Activated CD8-positive, alpha-beta T cell treated with anti-CD3 and anti-CD28 coated beads for 36 hours (primary cell): ENCODE measurements at regions of chr2 and their contacts with region 1.

Region 1: DNA sequence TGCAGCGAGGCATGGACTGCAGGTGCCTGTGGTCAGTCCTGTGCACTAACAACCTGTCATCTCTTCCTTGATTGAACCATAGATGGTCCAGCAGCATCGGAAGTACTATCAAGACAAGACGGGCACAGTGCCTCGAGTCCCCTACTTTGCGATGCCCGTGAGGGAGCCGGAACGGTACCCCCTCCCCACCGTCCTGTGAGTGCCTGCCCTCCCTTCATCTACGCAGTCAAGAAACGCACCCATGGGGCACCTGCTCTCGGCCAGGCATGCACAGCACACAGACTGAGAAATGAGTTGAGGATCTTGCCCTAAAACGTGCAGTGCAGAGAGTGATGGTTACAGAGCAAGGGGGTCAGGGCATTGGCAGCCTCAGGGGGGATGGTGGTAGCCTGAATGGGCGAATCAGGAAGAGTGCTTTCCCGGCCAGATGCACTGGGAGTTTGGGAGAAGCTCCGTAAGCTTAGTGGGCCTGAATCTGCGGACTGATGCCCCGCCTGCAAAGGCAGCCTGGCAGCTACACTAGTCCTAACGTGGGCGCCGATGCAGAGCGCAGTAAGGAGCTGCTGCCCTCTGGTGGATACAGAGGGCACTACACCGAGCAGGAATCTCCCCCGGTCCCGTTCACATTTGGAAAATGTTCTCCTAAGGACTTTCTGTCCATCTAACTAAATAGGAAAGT is 63.6 kb downstream of the CIB4 start:
- DNase-seq: peak; percentile 78
- ATAC-seq: peak; percentile 98
- H3K4me3 Mint-ChIP-seq: no peak overlapping the region
- H3K27ac Mint-ChIP-seq: no peak overlapping the region
- H3K4me1 Mint-ChIP-seq: no peaks in the 10 kb centered on the region
- H3K27me3 Mint-ChIP-seq: peaks cover 14% of the 10 kb centered on the region
- CTCF ChIP-seq: peak; percentile 98

Region 2: GRCh38 chr2:26503231-26503880 is 74.2 kb before region 1 on chr2:
- CTCF ChIA-PET with region 1: interaction called, 42 read pairs
- POLR2A ChIA-PET with region 1: no interaction called
- intact Hi-C with region 1: loop called (anchors 5 kb)
- DNase-seq: peak; percentile 89
- ATAC-seq: peak; percentile 99
- H3K4me3 Mint-ChIP-seq: peak overlapping the region; percentile 71
- H3K27ac Mint-ChIP-seq: peak overlapping the region; percentile 76
- H3K4me1 Mint-ChIP-seq: peaks cover 7% of the 10 kb centered on the region
- H3K27me3 Mint-ChIP-seq: peaks cover 1% of the 10 kb centered on the region
- CTCF ChIP-seq: peak; percentile 98

Region 3: DNA sequence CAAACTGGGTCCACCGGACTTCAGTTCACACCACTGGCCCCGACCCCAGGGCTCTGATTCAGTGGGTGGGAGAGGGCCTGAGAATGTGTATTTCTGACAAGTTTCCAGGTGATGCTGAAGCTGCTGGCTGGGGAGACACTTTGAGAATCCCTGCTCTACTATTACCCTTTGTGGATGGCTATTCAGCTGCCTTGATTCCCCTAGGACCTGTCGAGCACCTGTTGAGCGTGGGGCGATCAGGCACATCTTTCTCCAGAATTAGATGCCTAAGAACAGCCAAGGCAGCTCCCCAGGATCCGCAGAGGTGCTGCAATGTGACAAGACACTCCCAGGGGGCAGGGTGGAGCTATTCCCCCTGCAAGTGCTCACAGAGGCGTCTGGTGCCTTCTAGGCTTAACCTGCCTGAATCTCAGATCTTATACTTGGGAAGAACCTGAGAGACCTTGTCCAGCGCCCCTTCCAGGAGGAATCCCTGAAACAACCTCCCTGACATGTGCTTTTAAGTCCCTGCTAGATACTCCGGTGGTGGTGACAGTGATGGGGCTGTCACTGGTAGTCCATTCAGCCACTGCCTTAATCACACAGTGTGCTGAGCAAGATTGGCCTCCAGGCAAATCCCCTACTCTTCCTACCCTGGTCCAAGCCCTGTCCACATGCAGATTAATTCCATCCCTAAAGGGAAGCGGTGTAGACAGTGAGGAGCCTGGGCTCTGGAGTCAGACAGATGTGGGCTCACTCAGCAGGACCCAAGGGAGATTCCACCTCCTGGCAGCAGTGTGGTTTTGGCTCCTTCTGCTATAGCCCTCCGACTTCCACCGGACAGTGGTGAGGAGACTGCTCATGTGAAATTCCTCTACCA is 56.3 kb before region 1 on chr2:
- CTCF ChIA-PET with region 1: interaction called, 30 read pairs
- POLR2A ChIA-PET with region 1: interaction called, 3 read pairs
- intact Hi-C with region 1: no loop called
- DNase-seq: peak; percentile 27
- ATAC-seq: no peak
- H3K4me3 Mint-ChIP-seq: no peak overlapping the region
- H3K27ac Mint-ChIP-seq: no peak overlapping the region
- H3K4me1 Mint-ChIP-seq: peaks cover 14% of the 10 kb centered on the region
- H3K27me3 Mint-ChIP-seq: no peaks in the 10 kb centered on the region
- CTCF ChIP-seq: peak; percentile 28

Region 4: GRCh38 chr2:26555246-26556133 is 22.1 kb before region 1 on chr2:
- CTCF ChIA-PET with region 1: interaction called, 15 read pairs
- POLR2A ChIA-PET with region 1: interaction called, 3 read pairs
- intact Hi-C with region 1: no loop called
- DNase-seq: no peak
- ATAC-seq: no peak
- H3K4me3 Mint-ChIP-seq: no peak overlapping the region
- H3K27ac Mint-ChIP-seq: no peak overlapping the region
- H3K4me1 Mint-ChIP-seq: no peaks in the 10 kb centered on the region
- H3K27me3 Mint-ChIP-seq: peaks cover 28% of the 10 kb centered on the region
- CTCF ChIP-seq: no peak

Region 5: GRCh38 chr2:26561918-26562810 is 15.4 kb before region 1 on chr2:
- CTCF ChIA-PET with region 1: interaction called, 15 read pairs
- POLR2A ChIA-PET with region 1: no interaction called
- intact Hi-C with region 1: no loop called
- DNase-seq: peak; percentile 65
- ATAC-seq: peak; percentile 94
- H3K4me3 Mint-ChIP-seq: peak overlapping the region; percentile 33
- H3K27ac Mint-ChIP-seq: no peak overlapping the region
- H3K4me1 Mint-ChIP-seq: peaks cover 11% of the 10 kb centered on the region
- H3K27me3 Mint-ChIP-seq: peaks cover 61% of the 10 kb centered on the region
- CTCF ChIP-seq: peak; percentile 43

Region 6: DNA sequence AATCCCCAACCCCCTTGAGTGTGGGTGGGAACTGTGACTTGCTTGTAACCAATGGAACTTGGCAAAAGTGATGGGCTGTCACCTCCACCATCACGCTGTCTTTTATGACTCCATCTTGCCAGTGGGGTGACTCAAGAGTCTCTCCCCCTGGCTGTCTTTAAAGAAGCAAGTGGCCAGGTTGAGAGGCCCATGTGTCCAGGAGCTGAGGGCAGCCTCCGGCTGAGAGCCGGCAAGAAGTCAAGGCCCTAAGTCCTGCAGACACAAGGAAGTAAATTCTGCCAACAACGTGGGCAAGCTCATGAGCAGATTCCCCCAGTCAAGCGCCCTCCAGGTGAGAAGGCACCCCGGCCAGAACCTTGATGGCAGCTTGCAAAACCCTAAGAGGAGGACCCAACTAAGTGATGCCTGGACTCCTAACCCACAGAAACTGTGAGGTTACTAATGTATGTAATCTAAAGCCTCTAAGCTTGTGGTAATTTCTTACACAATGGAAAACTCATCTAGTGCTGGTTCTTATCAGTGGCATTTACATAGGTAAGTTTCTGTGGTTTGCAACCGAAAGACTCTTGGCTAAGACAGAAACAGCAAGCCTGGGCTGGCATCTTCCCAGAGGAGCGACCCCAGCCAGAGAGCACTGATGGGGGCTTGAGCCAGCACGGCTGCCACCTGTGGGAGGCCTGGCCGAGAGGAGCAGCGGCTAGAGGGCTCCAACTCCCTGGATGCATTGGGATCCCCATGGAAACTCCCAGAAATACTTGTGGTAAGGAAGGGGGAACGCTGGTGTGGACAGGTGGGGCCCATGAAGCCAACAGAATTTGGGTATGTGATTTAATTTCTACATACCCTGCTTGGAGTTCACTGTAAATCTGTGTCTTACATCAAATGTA is 14.3 kb after region 1 on chr2:
- CTCF ChIA-PET with region 1: interaction called, 25 read pairs
- POLR2A ChIA-PET with region 1: interaction called, 6 read pairs
- intact Hi-C with region 1: no loop called
- DNase-seq: peak; percentile 28
- ATAC-seq: peak; percentile 75
- H3K4me3 Mint-ChIP-seq: no peak overlapping the region
- H3K27ac Mint-ChIP-seq: no peak overlapping the region
- H3K4me1 Mint-ChIP-seq: peaks cover 11% of the 10 kb centered on the region
- H3K27me3 Mint-ChIP-seq: peaks cover 18% of the 10 kb centered on the region
- CTCF ChIP-seq: no peak

Region 7: GRCh38 chr2:26745609-26746327 is 168.2 kb after region 1 on chr2:
- CTCF ChIA-PET with region 1: interaction called, 13 read pairs
- POLR2A ChIA-PET with region 1: no interaction called
- intact Hi-C with region 1: no loop called
- DNase-seq: peak; percentile 91
- ATAC-seq: peak; percentile 79
- H3K4me3 Mint-ChIP-seq: no peak overlapping the region
- H3K27ac Mint-ChIP-seq: no peak overlapping the region
- H3K4me1 Mint-ChIP-seq: peaks cover 3% of the 10 kb centered on the region
- H3K27me3 Mint-ChIP-seq: no peaks in the 10 kb centered on the region
- CTCF ChIP-seq: peak; percentile 86

Region 8: GRCh38 chr2:27152786-27153510 is 575.4 kb after region 1 on chr2:
- CTCF ChIA-PET with region 1: no interaction called
- POLR2A ChIA-PET with region 1: no interaction called
- intact Hi-C with region 1: no loop called
- DNase-seq: peak; percentile 22
- ATAC-seq: peak; percentile 74
- H3K4me3 Mint-ChIP-seq: no peak overlapping the region
- H3K27ac Mint-ChIP-seq: no peak overlapping the region
- H3K4me1 Mint-ChIP-seq: no peaks in the 10 kb centered on the region
- H3K27me3 Mint-ChIP-seq: no peaks in the 10 kb centered on the region
- CTCF ChIP-seq: no peak